HCT116 (cell line): ENCODE measurements at regions of chr4 and their contacts with region 1.

Region 1: DNA sequence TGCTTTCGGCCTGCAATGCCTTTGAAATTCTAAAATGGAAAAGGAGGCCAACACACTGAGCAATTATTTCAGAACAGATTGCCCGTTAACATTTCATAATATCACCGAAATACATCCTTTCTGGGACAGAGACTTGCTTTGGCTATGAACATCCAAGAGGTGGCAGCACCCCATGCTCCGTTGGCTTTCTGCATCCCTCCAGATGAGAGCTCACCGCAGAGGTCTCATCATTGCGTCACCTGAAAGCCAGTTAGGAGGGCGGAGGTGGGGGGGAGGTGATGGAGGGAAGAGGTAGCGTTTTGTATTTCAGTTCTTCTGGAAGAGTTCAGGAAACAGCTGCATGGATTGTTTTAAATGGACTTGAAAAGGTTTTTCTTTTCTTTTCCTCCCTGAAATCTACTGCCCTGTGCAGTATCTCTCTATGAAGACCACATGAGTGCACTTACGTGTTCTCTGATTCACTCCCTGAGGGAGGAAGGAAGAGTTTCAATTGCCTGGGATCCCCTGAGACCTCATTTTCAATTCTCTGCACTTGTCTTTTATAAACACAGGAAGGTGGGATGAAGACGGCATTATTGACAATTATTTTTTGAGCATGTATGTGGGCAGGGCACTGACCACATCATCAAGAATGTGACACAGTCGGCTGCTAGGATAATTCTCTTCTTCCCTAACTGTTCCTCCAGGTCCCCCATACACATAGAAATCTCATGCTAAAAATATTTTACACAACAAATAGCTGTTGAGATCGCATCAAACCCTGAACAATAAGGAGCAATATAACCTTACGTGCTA is 166.9 kb upstream of the PGRMC2 start:
- DNase-seq: peak; percentile 75
- ATAC-seq: peak; percentile 100
- H3K4me3 ChIP-seq: no peak overlapping the region
- H3K27ac ChIP-seq: no peak overlapping the region
- H3K4me1 ChIP-seq: no peaks in the 10 kb centered on the region
- H3K27me3 ChIP-seq: no peaks in the 10 kb centered on the region; the same call in 1 of the 2 replicates
- CTCF ChIP-seq: peak; percentile 60 to 84 (median 81); a peak in 5 of 6 replicates
- POLR2A ChIP-seq: no peak
- RAD21 ChIP-seq: peak; percentile 89

Region 2: DNA sequence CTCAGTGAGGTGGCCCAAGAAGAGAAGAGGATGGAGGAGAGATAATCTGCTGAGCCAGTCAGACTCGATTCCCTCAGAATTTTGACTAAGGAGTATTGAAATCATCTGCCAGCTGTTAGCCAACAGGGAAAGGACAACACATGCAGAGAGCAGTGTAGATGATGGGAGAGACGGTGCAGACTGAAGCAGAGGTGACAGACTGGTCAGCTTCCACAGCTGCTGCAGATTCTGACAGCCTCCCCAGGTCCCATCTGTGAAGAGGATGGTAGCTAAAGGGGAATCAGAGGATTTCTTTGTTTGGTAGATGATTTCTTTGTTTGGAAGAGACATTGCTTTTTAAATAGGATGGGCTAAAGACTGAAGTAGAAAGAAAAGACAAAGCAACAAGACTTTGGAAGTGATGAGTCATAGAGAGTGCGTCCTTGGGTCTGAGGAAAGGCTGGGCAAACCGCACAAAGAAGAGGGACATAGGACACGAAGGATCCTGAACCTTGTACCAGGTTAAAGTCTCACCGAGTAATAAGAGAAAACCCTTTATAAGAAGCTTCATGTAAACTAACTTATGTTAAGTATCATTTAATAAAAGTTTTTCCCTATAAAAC is 794.1 kb before region 1 on chr4:
- CTCF ChIA-PET with region 1: no interaction called
- POLR2A ChIA-PET with region 1: no interaction called
- RAD21 ChIA-PET with region 1: no interaction called
- intact Hi-C with region 1: no loop called
- DNase-seq: no peak
- ATAC-seq: no peak
- H3K4me3 ChIP-seq: no peak overlapping the region
- H3K27ac ChIP-seq: no peak overlapping the region
- H3K4me1 ChIP-seq: no peaks in the 10 kb centered on the region
- H3K27me3 ChIP-seq: no peaks in the 10 kb centered on the region
- CTCF ChIP-seq: no peak
- POLR2A ChIP-seq: no peak
- RAD21 ChIP-seq: no peak

Region 3: DNA sequence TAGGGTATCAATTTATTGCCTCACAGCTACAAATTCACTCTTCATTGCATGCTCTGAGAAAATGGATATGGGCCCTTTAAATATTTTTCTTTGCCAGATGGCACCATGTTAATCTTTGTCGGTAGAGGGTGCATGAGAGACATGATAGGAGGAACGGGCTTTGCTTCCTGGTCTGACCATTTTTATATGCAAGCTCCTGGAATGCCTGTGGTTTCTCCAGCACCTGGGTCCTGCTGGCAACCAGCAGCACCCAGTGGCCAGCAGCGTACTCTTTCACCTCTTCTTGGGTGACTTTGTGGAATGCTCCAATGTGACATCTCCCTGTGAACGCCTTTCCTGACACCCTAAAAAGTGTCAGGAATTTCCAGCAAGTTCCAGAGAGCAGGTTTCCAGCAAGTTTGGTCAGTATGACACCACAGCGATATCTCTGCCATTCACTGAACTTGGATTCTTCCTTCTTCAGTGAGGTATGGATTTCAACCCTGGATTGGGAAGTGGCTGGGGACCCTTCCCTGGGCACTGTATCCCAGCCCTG is 26.6 kb before region 1 on chr4:
- CTCF ChIA-PET with region 1: interaction called, 17 read pairs
- POLR2A ChIA-PET with region 1: no interaction called
- RAD21 ChIA-PET with region 1: interaction called in 1 of 2 experiments, 4 read pairs
- intact Hi-C with region 1: no loop called
- DNase-seq: peak; percentile 86
- ATAC-seq: peak; percentile 99
- H3K4me3 ChIP-seq: peak overlapping the region; percentile 19; a peak in 3 of 4 replicates
- H3K27ac ChIP-seq: peak overlapping the region; percentile 6; the same call in 1 of the 2 replicates
- H3K4me1 ChIP-seq: peaks cover 3 to 15% of the 10 kb centered on the region in 2 experiments; a peak in 3 of 4 replicates
- H3K27me3 ChIP-seq: no peaks in the 10 kb centered on the region
- CTCF ChIP-seq: peak; percentile 46 to 71 (median 68); a peak in 5 of 6 replicates
- POLR2A ChIP-seq: no peak
- RAD21 ChIP-seq: peak; percentile 81

Region 4: GRCh38 chr4:128553686-128554515 is 99.4 kb after region 1 on chr4:
- CTCF ChIA-PET with region 1: interaction called, 3 read pairs
- POLR2A ChIA-PET with region 1: no interaction called
- RAD21 ChIA-PET with region 1: no interaction called
- intact Hi-C with region 1: loop called (anchors 2 kb)
- DNase-seq: no peak
- ATAC-seq: no peak
- H3K4me3 ChIP-seq: peak overlapping the region; percentile 45 to 62
- H3K27ac ChIP-seq: no peak overlapping the region
- H3K4me1 ChIP-seq: peaks cover 6 to 17% of the 10 kb centered on the region in 2 experiments; a peak in 3 of 4 replicates
- H3K27me3 ChIP-seq: peaks cover 5% of the 10 kb centered on the region; the same call in 1 of the 2 replicates
- CTCF ChIP-seq: no peak
- POLR2A ChIP-seq: no peak
- RAD21 ChIP-seq: no peak

Region 5: DNA sequence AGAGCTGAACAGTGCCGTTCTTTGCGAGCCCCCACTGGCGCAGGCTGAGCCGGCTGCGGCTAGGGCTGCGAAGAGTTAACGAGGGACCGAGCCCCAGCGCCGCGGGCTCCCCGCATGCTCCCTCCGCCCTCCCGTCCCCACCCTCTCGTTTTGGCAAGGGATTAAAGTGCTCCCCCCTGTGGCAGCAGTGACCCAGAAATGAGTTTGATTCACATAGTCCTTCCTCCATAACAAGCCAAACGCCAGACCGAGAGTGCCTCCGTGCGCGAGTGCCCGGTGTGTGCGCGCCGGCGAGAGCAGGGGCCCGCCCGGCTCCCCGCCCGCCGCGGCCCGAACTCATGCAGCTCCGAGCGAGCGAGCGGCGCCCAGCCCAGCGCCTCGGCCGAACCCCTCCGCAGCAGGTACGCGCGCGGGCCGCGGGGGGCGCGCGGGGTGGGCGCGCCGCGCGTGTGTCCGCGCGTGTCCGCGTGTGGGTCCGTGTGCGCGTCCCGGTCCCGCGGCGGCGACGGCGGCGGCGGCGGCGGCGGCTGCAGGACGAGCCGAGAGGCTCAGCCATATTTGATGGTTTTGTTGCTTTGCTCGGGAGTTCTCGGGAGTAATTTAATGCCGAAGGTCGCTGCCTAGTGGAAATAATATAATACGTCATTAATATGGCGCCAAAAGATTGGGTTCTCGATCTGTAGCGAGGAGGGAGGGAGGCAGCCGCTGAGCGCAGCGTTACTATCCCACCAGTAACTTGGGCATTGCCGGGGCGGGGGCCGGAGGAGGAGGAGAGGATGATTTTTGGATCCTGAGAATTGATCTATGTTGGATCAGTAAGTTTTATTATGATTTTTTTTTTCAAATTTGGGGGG is 355.2 kb after region 1 on chr4 and contains the start of gene JADE1:
- CTCF ChIA-PET with region 1: no interaction called
- POLR2A ChIA-PET with region 1: no interaction called
- RAD21 ChIA-PET with region 1: no interaction called
- intact Hi-C with region 1: loop called (anchors 5 kb)
- DNase-seq: peak; percentile 90
- ATAC-seq: peak; percentile 67
- H3K4me3 ChIP-seq: peak within 1 kb of the TSS; percentile 84 to 92
- H3K27ac ChIP-seq: peak within 1 kb of the TSS; percentile 91
- H3K4me1 ChIP-seq: peaks cover 10 to 27% of the 10 kb centered on the region in 2 experiments; a peak in 3 of 4 replicates
- H3K27me3 ChIP-seq: no peaks in the 10 kb centered on the region
- CTCF ChIP-seq: peak; percentile 49 to 89 (median 57)
- POLR2A ChIP-seq: peak; percentile 56
- RAD21 ChIP-seq: peak; percentile 81
- total RNA-seq, gene JADE1: 26.5 TPM